Ascending aorta (tissue), 2 donors: ENCODE measurements at regions of chr3 and their contacts with region 1.

Region 1: DNA sequence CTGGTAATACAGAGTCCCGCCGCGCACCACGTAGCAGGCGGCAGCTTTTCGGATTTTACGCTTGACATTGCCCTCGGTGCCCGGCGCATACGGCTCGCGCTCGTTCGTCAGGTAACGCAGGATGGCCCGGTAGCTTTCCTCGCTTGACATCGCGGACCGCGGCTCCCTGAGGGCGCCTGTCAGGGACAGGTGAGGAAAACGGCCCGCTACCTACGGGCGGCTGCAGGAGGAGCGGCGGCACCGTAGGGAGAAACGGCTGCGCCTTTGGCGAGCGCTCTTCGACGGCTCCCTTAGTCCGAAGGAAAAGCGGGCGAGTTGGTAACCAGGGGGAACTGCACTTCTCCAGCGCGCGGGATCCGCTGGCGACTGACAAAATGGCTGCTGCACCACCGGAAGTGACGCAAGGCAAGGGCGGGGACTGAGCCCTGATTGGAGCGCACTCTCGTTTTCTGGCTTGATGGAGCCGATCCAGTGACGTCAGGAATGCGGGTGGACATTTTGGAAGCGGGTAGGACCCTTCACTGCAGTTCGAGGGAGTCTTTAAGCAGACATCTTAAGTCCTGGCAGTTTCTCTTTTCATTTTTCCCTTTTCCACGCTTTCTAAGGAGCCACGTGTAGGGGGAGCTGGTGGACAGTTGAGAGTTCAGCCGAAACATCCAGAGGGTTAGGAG is at the start of gene ZBTB11:
- DNase-seq: peak; percentile 97 to 100
- H3K4me3 ChIP-seq: peak within 1 kb of the TSS; percentile 94 to 95
- H3K27ac ChIP-seq: peak within 1 kb of the TSS; percentile 93 to 95
- H3K4me1 ChIP-seq: peaks cover 5 to 12% of the 10 kb centered on the region in 2 donors
- H3K27me3 ChIP-seq: no peaks in the 10 kb centered on the region
- CTCF ChIP-seq: peak; percentile 40 to 66 (median 45)
- total RNA-seq, gene ZBTB11: 16.5 TPM

Region 2: GRCh38 chr3:100400780-100401673 is 1275.9 kb before region 1 on chr3 and contains the starts of genes LNP1 and TOMM70:
- intact Hi-C with region 1: loop called (anchors 2 kb)
- DNase-seq: peak; percentile 92 to 99
- H3K4me3 ChIP-seq: peak within 1 kb of the TSS; percentile 89 to 92
- H3K27ac ChIP-seq: peak within 1 kb of the TSS; percentile 90 to 91
- H3K4me1 ChIP-seq: peaks cover 10 to 30% of the 10 kb centered on the region in 2 donors
- H3K27me3 ChIP-seq: no peaks in the 10 kb centered on the region
- CTCF ChIP-seq: no peak
- total RNA-seq, gene LNP1: 1.3 TPM
- total RNA-seq, gene TOMM70: 16.4 TPM

Region 3: GRCh38 chr3:101512646-101513418 is 164.1 kb before region 1 on chr3 and contains the start of gene SENP7:
- intact Hi-C with region 1: loop called (anchors 5 kb)
- DNase-seq: peak; percentile 16 to 91
- H3K4me3 ChIP-seq: peak within 1 kb of the TSS; percentile 91 to 96
- H3K27ac ChIP-seq: peak within 1 kb of the TSS; percentile 91 to 92
- H3K4me1 ChIP-seq: no peaks in the 10 kb centered on the region
- H3K27me3 ChIP-seq: no peaks in the 10 kb centered on the region
- CTCF ChIP-seq: no peak
- total RNA-seq, gene SENP7: 6.1 TPM

Region 4: DNA sequence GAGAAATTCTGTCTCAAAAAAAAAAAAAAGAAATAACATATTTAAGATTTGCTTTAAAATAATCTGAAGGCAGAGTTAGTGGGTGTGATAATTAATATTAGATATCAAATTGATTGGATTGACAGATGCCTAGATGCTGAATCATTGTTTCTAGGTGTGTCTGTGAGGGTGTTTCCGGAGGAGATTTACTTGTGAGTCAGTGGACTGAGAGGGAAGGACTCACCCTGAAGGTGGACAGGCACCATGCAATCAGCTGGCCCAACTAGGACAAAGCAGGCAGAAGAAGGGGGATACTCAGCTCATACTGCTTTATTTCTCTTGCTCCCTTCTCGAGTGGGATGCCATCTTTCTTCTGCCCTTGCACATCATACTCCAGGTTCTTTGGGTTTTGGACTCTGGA is 26.3 kb after region 1 on chr3:
- intact Hi-C with region 1: loop called (anchors 1 kb)
- DNase-seq: no peak
- H3K4me3 ChIP-seq: no peak overlapping the region
- H3K27ac ChIP-seq: no peak overlapping the region
- H3K4me1 ChIP-seq: no peaks in the 10 kb centered on the region
- H3K27me3 ChIP-seq: no peaks in the 10 kb centered on the region
- CTCF ChIP-seq: no peak

Region 5: GRCh38 chr3:101849051-101849720 is 172.3 kb after region 1 on chr3 and contains the start of gene NFKBIZ:
- intact Hi-C with region 1: loop called (anchors 1 kb)
- DNase-seq: peak; percentile 87 to 98
- H3K4me3 ChIP-seq: peak within 1 kb of the TSS; percentile 90 to 93
- H3K27ac ChIP-seq: peak within 1 kb of the TSS; percentile 98 to 99
- H3K4me1 ChIP-seq: peaks cover 0 to 26% of the 10 kb centered on the region in 2 donors
- H3K27me3 ChIP-seq: no peaks in the 10 kb centered on the region
- CTCF ChIP-seq: peak in 1 of 3 experiments; percentile 20
- total RNA-seq, gene NFKBIZ: 349 TPM